ENCODE measurements at regions of chr15 and their contacts with region 1.

Region 1: GRCh38 chr15:90101969-90102890 is at the start of gene IDH2:
- DNase-seq: peak; percentile 73
- H3K4me3 Mint-ChIP-seq: peak within 1 kb of the TSS; percentile 55
- H3K27ac Mint-ChIP-seq: no peak within 1 kb of the TSS
- H3K4me1 Mint-ChIP-seq: peaks cover 23% of the 10 kb centered on the region
- H3K27me3 Mint-ChIP-seq: no peaks in the 10 kb centered on the region
- CTCF ChIP-seq: no peak
- total RNA-seq, gene IDH2: 4.2 and 10.2 TPM in 2 replicates

Region 2: GRCh38 chr15:90126457-90127435 is 24.5 kb after region 1 on chr15:
- CTCF ChIA-PET with region 1: no interaction called
- POLR2A ChIA-PET with region 1: interaction called, 3 read pairs
- intact Hi-C with region 1: loop called (anchors 2 kb)
- DNase-seq: no peak
- H3K4me3 Mint-ChIP-seq: no peak overlapping the region
- H3K27ac Mint-ChIP-seq: no peak overlapping the region
- H3K4me1 Mint-ChIP-seq: no peaks in the 10 kb centered on the region
- H3K27me3 Mint-ChIP-seq: peaks cover 13% of the 10 kb centered on the region
- CTCF ChIP-seq: no peak